ENCODE measurements at regions of chr2 and their contacts with region 1.

Region 1: DNA sequence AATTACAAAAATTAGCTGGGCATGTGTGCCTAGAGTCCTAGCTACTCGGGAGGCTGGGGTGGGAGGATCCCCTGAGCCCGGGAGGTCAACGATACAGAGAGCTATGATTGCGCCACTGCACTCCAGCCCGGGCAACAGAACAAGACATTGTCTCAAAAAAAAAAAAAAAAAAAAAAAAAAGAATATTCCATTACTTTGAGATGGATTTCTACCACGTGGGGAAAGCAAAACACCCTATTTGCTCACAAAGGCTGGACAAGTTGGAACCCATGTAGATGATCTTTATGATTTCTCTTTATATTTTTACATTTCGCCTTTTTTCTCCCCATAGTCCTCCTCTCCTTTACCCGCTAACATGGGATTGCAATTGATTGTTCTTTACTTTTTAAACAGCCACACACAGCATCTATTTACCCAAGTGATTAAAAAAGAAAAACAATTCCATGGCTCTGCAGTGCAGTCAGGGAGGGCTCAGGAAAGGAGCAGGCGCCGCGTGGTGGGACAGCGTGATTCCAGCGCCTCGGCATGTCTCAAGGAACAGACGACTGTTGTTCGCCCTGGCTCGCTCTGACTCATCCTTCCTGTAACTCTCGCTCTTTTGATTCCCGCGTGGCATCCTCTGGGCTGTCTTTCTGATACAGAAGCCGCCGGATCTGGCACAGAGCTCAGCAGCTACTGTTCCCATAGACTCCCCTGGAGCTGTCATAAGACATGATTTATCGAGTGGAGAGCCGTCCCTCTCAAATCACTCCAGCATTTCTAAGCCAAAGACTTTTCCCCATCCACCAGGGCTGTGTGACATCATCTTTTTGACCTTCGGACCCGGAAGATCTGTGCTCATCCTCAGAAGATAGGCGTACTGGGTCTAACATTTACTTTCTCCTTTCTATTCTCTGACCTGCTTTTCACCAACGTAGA is 230.4 kb upstream of the AGAP1 start:
- DNase-seq: peak; percentile 93
- ATAC-seq: peak; percentile 91
- H3K4me3 ChIP-seq: no peak overlapping the region
- H3K27ac ChIP-seq: peak overlapping the region; percentile 66
- H3K4me1 ChIP-seq: peaks cover 25% of the 10 kb centered on the region
- H3K27me3 ChIP-seq: no peaks in the 10 kb centered on the region
- CTCF ChIP-seq: no peak
- POLR2A ChIP-seq: no peak
- RAD21 ChIP-seq: 0 out of 2 replicates have a peak, but pooled peaks have one; percentile 16

Region 2: GRCh38 chr2:234679741-234680687 is 583.5 kb before region 1 on chr2:
- CTCF ChIA-PET with region 1: no interaction called
- POLR2A ChIA-PET with region 1: no interaction called
- dilution Hi-C with region 1: no loop called
- in situ Hi-C with region 1: no loop called
- intact Hi-C with region 1: no loop called
- DNase-seq: peak; percentile 99
- ATAC-seq: peak; percentile 75
- H3K4me3 ChIP-seq: peak overlapping the region; percentile 5; the same call in 1 of the 2 replicates
- H3K27ac ChIP-seq: peak overlapping the region; percentile 90
- H3K4me1 ChIP-seq: peaks cover 34% of the 10 kb centered on the region
- H3K27me3 ChIP-seq: no peaks in the 10 kb centered on the region
- CTCF ChIP-seq: no peak
- POLR2A ChIP-seq: peak; percentile 73; the same call in 1 of the 2 replicates
- RAD21 ChIP-seq: peak; percentile 28

Region 3: DNA sequence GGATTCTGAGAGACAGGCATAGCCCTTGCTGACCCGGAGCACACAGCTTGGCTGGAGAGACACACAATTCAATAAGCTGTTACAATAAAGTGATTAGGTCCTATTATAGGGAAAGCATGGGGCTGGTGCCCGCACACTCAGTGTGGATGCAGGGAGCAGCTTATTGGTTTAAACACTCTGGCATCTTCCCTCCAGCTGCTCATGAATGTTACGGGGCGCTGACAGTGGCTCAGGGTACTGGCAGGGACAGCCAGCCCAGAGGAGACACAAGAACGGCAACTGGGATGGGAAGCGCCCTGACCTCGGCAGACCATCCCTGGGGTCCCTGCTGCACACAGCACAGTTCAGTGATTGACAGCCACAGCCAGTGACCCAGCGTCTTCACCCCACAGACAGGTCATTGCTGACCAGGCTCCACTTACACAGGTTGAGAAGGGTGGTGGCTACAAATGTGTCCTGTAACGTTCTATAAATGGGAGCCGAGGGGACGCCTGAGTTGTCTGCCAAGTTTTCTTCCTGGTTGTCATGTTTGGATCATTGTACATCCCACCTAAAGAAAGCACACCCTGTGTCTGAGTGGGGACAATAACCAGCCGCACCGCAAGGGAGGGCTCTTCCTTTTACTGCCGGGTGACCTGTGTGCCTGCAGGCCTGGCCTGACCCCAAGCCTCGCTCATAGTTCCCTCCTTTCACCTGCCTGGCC is 251.4 kb before region 1 on chr2:
- CTCF ChIA-PET with region 1: no interaction called
- POLR2A ChIA-PET with region 1: no interaction called
- dilution Hi-C with region 1: no loop called
- in situ Hi-C with region 1: no loop called
- intact Hi-C with region 1: no loop called
- DNase-seq: no peak
- ATAC-seq: no peak
- H3K4me3 ChIP-seq: no peak overlapping the region
- H3K27ac ChIP-seq: no peak overlapping the region
- H3K4me1 ChIP-seq: peaks cover 26% of the 10 kb centered on the region
- H3K27me3 ChIP-seq: no peaks in the 10 kb centered on the region
- CTCF ChIP-seq: no peak
- POLR2A ChIP-seq: 0 out of 2 replicates have a peak, but pooled peaks have one; percentile 21
- RAD21 ChIP-seq: no peak

Region 4: DNA sequence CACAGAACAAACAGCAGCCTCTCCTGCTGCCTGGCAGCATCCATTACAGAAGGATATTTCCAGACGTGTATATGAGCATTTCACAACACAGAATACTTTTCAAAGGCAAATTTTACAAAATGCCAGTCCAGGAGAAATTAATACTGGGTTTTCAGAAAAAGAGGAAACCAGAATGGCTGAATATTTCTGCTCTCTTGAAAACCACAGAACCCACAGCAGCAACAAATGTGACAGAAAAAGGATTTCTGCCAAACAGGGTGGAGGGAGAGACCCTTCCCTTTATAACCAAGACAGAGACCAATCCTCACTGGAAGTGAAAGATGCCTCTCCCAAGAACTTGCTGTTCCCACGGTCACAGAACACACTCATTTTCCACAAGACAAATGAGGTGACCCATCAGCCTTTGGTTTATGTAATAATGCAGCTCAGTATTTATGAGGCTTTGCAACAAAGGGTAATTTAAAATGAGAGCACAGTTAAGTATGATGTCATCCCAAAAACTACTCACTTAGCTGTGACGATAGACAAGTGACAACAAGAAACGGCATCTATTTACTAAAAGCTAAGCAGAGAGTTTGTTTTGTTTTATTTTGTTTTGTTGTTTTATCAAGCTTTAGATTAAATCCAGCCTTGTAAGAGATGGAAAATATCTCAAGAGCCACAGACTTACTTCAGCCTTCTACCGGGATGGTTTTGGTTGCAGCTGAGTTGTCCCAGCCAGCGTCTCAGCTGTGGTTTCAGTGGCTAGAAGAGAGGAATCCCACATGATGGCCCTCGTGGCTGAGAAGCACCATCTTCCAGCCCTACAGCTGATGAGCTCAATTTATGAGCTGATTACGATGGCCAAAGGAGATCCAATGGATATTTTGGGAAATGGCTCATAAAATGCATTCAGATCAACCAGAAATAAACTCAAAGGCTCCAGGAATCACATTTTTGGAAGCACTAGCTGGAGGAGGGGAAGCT is 18.9 kb before region 1 on chr2:
- CTCF ChIA-PET with region 1: interaction called, 4 read pairs
- POLR2A ChIA-PET with region 1: interaction called, 10 read pairs
- dilution Hi-C with region 1: no loop called
- in situ Hi-C with region 1: no loop called
- intact Hi-C with region 1: no loop called
- DNase-seq: peak; percentile 15
- ATAC-seq: peak; percentile 11; the same call in 1 of the 2 replicates
- H3K4me3 ChIP-seq: no peak overlapping the region
- H3K27ac ChIP-seq: no peak overlapping the region
- H3K4me1 ChIP-seq: no peaks in the 10 kb centered on the region
- H3K27me3 ChIP-seq: peaks cover 22% of the 10 kb centered on the region
- CTCF ChIP-seq: no peak
- POLR2A ChIP-seq: no peak
- RAD21 ChIP-seq: no peak

Region 5: DNA sequence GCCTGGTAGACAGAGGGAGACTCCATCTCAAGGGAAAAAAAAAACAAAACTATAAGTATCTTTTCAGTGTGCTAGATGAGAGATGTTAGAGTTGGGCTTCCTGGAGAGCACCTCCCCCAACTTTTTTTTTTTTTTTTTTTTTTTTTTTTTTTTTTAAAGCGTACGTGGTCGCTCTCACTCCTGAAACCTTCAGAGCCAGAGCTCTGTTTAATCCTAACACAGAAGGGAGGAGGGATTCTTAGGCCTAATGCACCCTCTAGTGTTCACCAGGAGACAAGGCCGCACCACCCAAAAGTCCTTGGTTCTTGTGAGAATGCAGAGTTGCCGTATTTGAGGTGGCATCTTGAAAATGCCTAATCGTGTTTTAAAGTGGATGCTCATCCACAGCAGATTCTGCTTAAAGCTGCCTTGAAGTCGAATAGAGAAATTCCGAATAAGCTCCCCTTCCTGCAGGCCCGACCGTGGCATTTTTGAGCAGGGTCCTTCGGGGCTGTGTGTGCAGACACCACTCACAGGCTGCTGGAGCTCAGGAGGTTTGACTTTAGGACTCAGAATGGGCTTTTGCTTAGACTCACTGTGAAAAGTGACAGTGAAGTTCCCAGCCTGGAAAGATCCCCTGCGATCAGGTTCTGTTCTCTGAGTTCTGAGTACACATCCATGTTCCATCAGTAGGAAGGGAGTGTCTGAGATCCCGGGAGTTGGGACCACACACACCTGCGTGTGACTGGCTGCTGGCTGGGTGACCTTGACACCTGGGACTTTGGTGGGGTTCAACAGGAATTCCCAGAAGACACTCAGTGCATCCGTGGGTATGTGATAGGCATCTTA is 483.0 kb after region 1 on chr2:
- CTCF ChIA-PET with region 1: no interaction called
- POLR2A ChIA-PET with region 1: no interaction called
- dilution Hi-C with region 1: no loop called
- in situ Hi-C with region 1: no loop called
- intact Hi-C with region 1: loop called (anchors 10 kb)
- DNase-seq: peak; percentile 90
- ATAC-seq: peak; percentile 88
- H3K4me3 ChIP-seq: no peak overlapping the region
- H3K27ac ChIP-seq: no peak overlapping the region
- H3K4me1 ChIP-seq: peaks cover 8% of the 10 kb centered on the region
- H3K27me3 ChIP-seq: no peaks in the 10 kb centered on the region
- CTCF ChIP-seq: peak; percentile 94
- POLR2A ChIP-seq: no peak
- RAD21 ChIP-seq: peak; percentile 97